CD14-positive monocyte (primary cell): ENCODE measurements at regions of chr2 and their contacts with region 1.

Region 1: GRCh38 chr2:38128653-38129052 is 52.7 kb upstream of the CYP1B1 start:
- DNase-seq: peak; percentile 94 to 98 (median 95)
- H3K4me3 ChIP-seq: no peak overlapping the region
- H3K4me3 Mint-ChIP-seq: peak overlapping the region in 1 of 2 donors; percentile 30
- H3K27ac ChIP-seq: peak overlapping the region; percentile 93
- H3K27ac Mint-ChIP-seq: peak overlapping the region; percentile 94 to 99 (median 99)
- H3K4me1 ChIP-seq: peaks cover 69 to 82% of the 10 kb centered on the region in 2 donors
- H3K4me1 Mint-ChIP-seq: peaks cover 79% of the 10 kb centered on the region
- H3K27me3 ChIP-seq: no peaks in the 10 kb centered on the region
- H3K27me3 Mint-ChIP-seq: peaks cover 0 to 5% (median 0%) of the 10 kb centered on the region in 3 donors
- CTCF ChIP-seq: no peak

Region 2: GRCh38 chr2:37786854-37787253 is 341.8 kb before region 1 on chr2:
- intact Hi-C with region 1: no loop called
- DNase-seq: no peak
- H3K4me3 ChIP-seq: no peak overlapping the region
- H3K4me3 Mint-ChIP-seq: no peak overlapping the region
- H3K27ac ChIP-seq: no peak overlapping the region
- H3K27ac Mint-ChIP-seq: peak overlapping the region in 1 of 7 donors; percentile 27
- H3K4me1 ChIP-seq: peaks cover 0 to 9% of the 10 kb centered on the region in 2 donors
- H3K4me1 Mint-ChIP-seq: peaks cover 14% of the 10 kb centered on the region
- H3K27me3 ChIP-seq: no peaks in the 10 kb centered on the region
- H3K27me3 Mint-ChIP-seq: no peaks in the 10 kb centered on the region
- CTCF ChIP-seq: no peak

Region 3: DNA sequence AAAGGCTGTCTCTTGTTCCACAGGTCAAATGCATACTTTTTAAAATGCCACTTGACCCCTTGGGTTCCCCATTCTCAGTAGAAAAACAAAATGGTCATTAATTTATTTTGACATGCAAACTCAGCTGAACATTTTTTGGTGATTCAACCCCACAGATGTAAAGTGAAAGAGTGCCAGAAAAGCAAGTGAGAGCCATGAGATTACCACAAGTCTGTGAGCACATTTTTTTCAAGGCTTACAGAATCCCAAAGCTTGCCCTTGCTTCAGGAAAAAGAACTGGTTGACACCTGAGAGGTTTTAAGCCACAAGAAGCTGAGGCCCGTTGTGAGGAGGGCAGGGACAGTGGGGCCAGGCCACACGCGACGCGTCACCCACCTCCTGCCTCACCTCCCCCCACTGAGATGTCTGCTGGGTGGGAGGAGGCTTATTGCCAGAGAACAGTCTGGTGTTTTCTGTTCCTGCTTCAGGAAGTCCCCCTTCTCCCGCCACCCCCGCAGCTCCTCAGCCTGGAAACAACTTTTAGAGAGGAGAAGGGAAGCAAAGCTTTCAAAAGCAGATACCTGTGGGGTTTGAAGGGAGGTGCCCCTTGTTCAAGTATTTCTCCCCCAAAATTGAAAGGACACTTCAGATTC is 17.7 kb after region 1 on chr2:
- intact Hi-C with region 1: loop called in 1 of 2 experiments (anchors 2 kb)
- DNase-seq: peak; percentile 49 to 82 (median 61)
- H3K4me3 ChIP-seq: peak overlapping the region in 1 of 3 experiments; percentile 29
- H3K4me3 Mint-ChIP-seq: peak overlapping the region in 1 of 2 donors; percentile 9
- H3K27ac ChIP-seq: peak overlapping the region; percentile 92
- H3K27ac Mint-ChIP-seq: peak overlapping the region in 6 of 7 donors; percentile 92 to 99 (median 98)
- H3K4me1 ChIP-seq: peaks cover 73 to 85% of the 10 kb centered on the region in 2 donors
- H3K4me1 Mint-ChIP-seq: peaks cover 55% of the 10 kb centered on the region
- H3K27me3 ChIP-seq: no peaks in the 10 kb centered on the region
- H3K27me3 Mint-ChIP-seq: no peaks in the 10 kb centered on the region
- CTCF ChIP-seq: no peak